ENCODE measurements at regions of chr1 and their contacts with region 1.

Region 1: GRCh38 chr1:212368073-212368484 is 46.6 kb downstream of the PACC1 start:
- DNase-seq: peak; percentile 88
- H3K4me3 Mint-ChIP-seq: no peak overlapping the region
- H3K27ac Mint-ChIP-seq: no peak overlapping the region
- H3K4me1 Mint-ChIP-seq: no peaks in the 10 kb centered on the region
- H3K27me3 Mint-ChIP-seq: no peaks in the 10 kb centered on the region

Region 2: DNA sequence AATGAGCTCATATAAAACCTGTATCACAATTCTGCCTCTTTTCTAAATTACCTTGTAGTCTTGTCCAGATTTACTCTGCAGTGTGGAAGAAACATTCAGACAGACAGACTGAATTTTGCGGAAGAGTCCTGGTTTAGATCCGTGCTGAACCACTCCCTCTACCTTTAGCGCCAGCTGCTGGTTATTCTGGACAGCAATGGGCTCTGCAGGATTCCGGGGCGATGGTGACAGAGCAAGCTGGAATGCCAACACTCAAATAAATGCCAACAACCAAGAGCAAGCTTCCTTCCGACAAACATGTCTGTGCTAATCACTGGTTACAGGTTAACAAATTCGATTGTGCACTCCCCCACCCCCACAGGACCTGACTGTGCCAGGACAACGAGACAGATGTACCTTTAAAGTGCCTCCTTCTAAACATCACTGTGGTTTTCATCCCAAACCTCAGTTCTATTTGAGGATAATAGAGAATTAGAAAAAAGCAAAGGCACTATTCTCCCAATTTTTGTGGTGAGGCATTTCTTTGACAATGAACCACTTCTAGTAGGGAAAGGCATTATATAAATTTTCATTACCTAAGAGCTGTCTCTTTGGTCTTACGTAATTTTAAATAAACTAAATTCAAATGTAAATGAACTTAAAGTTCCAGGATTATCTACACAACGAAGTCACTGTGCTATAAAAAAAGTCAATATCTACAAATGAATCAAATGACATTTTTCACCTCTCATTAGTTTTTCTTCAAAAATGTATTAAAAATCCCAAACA is 423.2 kb before region 1 on chr1:
- intact Hi-C with region 1: no loop called
- DNase-seq: no peak
- H3K4me3 Mint-ChIP-seq: no peak overlapping the region
- H3K27ac Mint-ChIP-seq: no peak overlapping the region
- H3K4me1 Mint-ChIP-seq: peaks cover 7% of the 10 kb centered on the region
- H3K27me3 Mint-ChIP-seq: no peaks in the 10 kb centered on the region

Region 3: GRCh38 chr1:212012034-212012740 is 355.9 kb before region 1 on chr1:
- intact Hi-C with region 1: loop called (anchors 1 kb)
- DNase-seq: peak; percentile 89
- H3K4me3 Mint-ChIP-seq: no peak overlapping the region
- H3K27ac Mint-ChIP-seq: no peak overlapping the region
- H3K4me1 Mint-ChIP-seq: peaks cover 3% of the 10 kb centered on the region
- H3K27me3 Mint-ChIP-seq: no peaks in the 10 kb centered on the region

Region 4: DNA sequence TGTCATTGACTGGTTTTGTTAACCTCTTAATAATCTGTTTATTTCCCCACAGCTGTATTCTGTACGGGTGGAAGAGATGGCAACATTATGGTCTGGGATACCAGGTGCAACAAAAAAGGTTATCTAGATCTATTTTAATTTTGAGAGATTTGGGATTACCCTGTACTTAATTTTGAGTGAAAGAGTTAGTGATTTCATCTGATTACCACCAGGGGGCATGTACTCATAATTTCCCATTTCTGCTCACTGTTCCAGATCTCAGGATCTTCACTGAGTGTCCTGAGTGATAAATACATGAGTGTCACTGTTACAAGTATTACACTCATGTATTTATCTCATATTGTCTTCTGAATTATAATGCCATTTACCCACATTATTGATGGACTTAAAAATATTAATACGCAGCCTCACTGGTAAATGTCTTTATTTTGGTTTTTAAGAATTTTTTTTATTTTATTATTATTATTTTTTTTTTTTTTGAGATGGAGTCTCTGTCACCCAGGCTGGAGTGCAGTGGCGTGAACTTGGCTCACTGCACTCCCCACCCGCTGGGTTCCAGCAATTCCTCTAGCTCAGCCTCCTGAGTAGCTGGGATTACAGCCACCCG is 305.1 kb before region 1 on chr1:
- intact Hi-C with region 1: loop called (anchors 1 kb)
- DNase-seq: no peak
- H3K4me3 Mint-ChIP-seq: no peak overlapping the region
- H3K27ac Mint-ChIP-seq: no peak overlapping the region
- H3K4me1 Mint-ChIP-seq: peaks cover 19% of the 10 kb centered on the region
- H3K27me3 Mint-ChIP-seq: no peaks in the 10 kb centered on the region

Region 5: DNA sequence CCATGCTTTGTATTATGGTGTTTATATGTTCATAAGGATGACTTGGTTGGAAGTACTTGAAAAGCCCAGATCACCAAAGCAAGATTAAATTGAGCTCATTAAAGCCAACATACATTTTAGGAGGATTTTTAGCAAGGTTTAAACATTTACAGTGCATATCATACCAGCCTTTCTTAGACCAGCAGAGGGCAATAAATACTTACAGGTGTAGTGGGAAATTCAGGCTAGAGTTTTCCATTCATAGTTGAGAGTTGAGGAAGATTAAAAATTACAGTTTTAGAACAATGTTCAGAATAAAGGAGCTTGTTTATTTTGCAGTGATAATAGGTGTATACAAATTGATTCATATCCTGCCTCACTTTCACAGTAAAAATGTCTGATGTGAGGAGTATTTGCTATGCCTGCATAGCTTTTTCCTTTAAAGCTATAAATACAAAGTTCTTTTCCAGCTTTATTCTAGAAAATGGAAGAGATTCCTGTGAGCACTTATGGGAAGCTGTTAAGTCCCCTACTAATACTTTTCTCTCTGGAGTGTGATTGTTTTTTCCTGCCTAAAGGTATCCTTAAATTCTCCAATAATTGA is 297.3 kb before region 1 on chr1:
- intact Hi-C with region 1: loop called (anchors 1 kb)
- DNase-seq: no peak
- H3K4me3 Mint-ChIP-seq: no peak overlapping the region
- H3K27ac Mint-ChIP-seq: no peak overlapping the region
- H3K4me1 Mint-ChIP-seq: peaks cover 4% of the 10 kb centered on the region
- H3K27me3 Mint-ChIP-seq: no peaks in the 10 kb centered on the region

Region 6: DNA sequence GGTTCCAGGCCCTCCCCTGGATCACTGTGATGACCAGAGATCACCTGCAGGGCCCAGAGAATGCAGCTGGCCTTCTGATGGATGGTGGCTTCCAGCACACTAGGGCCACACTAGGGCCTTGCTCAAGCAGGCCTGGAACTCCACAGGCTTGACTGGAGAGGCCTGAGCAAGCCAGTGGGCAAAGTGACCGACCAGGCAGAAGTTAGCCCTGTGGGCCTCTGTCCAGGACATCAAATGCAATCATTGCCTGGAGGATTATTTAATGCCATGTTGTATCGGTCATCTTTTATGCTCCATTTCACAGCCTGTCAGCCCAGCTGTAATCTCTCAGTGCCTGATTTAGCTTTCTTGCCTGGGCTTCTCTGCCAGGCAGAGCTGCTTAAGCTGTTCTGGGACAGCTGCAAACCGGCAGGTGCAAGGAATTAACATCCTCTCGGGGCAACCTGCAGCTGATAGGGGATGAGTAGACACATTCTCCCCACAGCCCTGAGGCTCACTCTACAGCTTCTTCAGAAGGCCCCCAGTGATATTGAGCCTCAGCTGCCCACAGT is 82.3 kb after region 1 on chr1:
- intact Hi-C with region 1: no loop called
- DNase-seq: no peak
- H3K4me3 Mint-ChIP-seq: no peak overlapping the region
- H3K27ac Mint-ChIP-seq: no peak overlapping the region
- H3K4me1 Mint-ChIP-seq: peaks cover 2% of the 10 kb centered on the region
- H3K27me3 Mint-ChIP-seq: no peaks in the 10 kb centered on the region

Measured in activated CD4-positive, alpha-beta T cell treated with anti-CD3 and anti-CD28 coated beads, Interleukin-2, amount 10 ng/mL, durations not matched to agents 24 days and 14 days (primary cell).